CD8-positive, alpha-beta T cell (primary cell): ENCODE measurements at regions of chr18 and their contacts with region 1.

Region 1: GRCh38 chr18:63320046-63320689 is 599 bp upstream of the BCL2 start:
- DNase-seq: peak; percentile 73 to 95 (median 88)
- ATAC-seq: peak; percentile 80
- H3K4me3 ChIP-seq: peak overlapping the region; percentile 53 to 56
- H3K4me3 Mint-ChIP-seq: peak overlapping the region; percentile 88
- H3K27ac ChIP-seq: peak overlapping the region in 1 of 2 experiments; percentile 29
- H3K27ac Mint-ChIP-seq: peak overlapping the region; percentile 94
- H3K4me1 ChIP-seq: peaks cover 16% of the 10 kb centered on the region
- H3K4me1 Mint-ChIP-seq: peaks cover 42% of the 10 kb centered on the region
- H3K27me3 ChIP-seq: no peaks in the 10 kb centered on the region
- H3K27me3 Mint-ChIP-seq: no peaks in the 10 kb centered on the region
- CTCF ChIP-seq: no peak

Region 2: DNA sequence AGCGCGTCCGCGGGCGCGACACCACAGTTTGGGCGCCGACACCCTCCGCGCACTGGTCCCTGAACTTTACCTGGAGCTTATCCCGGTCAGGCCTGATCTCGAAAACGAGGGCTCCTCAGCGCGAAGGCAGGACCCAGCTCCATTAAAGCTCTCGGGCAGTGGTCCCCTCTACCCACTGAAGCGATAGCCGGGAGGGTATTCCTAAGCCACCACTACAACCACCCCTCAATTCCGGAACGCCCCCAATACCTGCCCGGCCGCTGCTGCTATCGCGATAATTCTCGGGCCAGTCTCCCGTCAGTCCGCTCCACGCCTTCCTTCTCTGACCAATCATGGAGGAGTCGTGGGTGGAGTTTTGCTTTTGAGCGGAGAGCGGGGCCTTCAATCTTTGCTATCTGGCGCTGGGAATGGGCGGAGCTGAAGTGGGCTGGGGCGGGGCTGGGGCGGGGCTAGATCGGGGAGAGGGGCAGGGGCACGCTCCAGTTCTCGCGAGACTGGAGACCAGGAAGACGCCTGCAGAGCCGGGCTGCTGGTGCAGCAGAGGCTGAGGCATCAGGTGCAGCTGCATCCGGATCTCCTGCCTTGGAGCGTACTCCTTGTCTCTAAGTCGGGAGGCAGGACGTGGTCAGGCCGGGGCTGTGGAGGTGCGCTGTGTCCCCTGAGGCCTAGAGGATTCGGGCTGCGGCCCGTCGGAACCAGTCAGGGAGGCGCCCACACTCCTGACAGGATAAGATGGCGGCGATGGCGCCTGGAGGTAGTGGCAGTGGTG is 1133.2 kb before region 1 on chr18 and contains the starts of genes PIGN and RELCH:
- CTCF ChIA-PET with region 1: no interaction called
- POLR2A ChIA-PET with region 1: no interaction called
- intact Hi-C with region 1: loop called in 1 of 2 experiments (anchors 2 kb)
- DNase-seq: peak; percentile 89 to 99 (median 93)
- ATAC-seq: peak; percentile 91
- H3K4me3 ChIP-seq: peak within 1 kb of the TSS; percentile 92 to 99
- H3K4me3 Mint-ChIP-seq: peak within 1 kb of the TSS; percentile 100
- H3K27ac ChIP-seq: peak within 1 kb of the TSS; percentile 63 to 79
- H3K27ac Mint-ChIP-seq: peak within 1 kb of the TSS; percentile 97
- H3K4me1 ChIP-seq: peaks cover 43% of the 10 kb centered on the region
- H3K4me1 Mint-ChIP-seq: peaks cover 63% of the 10 kb centered on the region
- H3K27me3 ChIP-seq: no peaks in the 10 kb centered on the region
- H3K27me3 Mint-ChIP-seq: no peaks in the 10 kb centered on the region
- CTCF ChIP-seq: no peak
- total RNA-seq, gene PIGN: 8.1 to 9.9 TPM
- total RNA-seq, gene RELCH: 39.2 to 40.5 TPM

Region 3: GRCh38 chr18:63119647-63120046 is 200.5 kb before region 1 on chr18:
- CTCF ChIA-PET with region 1: interaction called, 11 read pairs
- POLR2A ChIA-PET with region 1: interaction called, 5 read pairs
- intact Hi-C with region 1: no loop called
- DNase-seq: peak in 1 of 9 experiments; percentile 30
- ATAC-seq: no peak
- H3K4me3 ChIP-seq: no peak overlapping the region
- H3K4me3 Mint-ChIP-seq: no peak overlapping the region
- H3K27ac ChIP-seq: no peak overlapping the region
- H3K27ac Mint-ChIP-seq: no peak overlapping the region
- H3K4me1 ChIP-seq: no peaks in the 10 kb centered on the region
- H3K4me1 Mint-ChIP-seq: peaks cover 6% of the 10 kb centered on the region
- H3K27me3 ChIP-seq: peaks cover 0 to 2% of the 10 kb centered on the region in 2 experiments
- H3K27me3 Mint-ChIP-seq: peaks cover 3% of the 10 kb centered on the region
- CTCF ChIP-seq: peak; percentile 21

Region 4: GRCh38 chr18:63155169-63155852 is 164.9 kb before region 1 on chr18:
- CTCF ChIA-PET with region 1: interaction called, 70 read pairs
- POLR2A ChIA-PET with region 1: interaction called, 23 read pairs
- intact Hi-C with region 1: loop called (anchors 1 to 2 kb)
- DNase-seq: peak; percentile 66 to 92 (median 78)
- ATAC-seq: peak; percentile 75
- H3K4me3 ChIP-seq: peak overlapping the region; percentile 46 to 53
- H3K4me3 Mint-ChIP-seq: peak overlapping the region; percentile 83
- H3K27ac ChIP-seq: peak overlapping the region; percentile 48 to 99
- H3K27ac Mint-ChIP-seq: peak overlapping the region; percentile 98
- H3K4me1 ChIP-seq: peaks cover 94% of the 10 kb centered on the region
- H3K4me1 Mint-ChIP-seq: peaks cover 99% of the 10 kb centered on the region
- H3K27me3 ChIP-seq: no peaks in the 10 kb centered on the region
- H3K27me3 Mint-ChIP-seq: no peaks in the 10 kb centered on the region
- CTCF ChIP-seq: peak; percentile 79

Region 5: GRCh38 chr18:63216516-63217311 is 103.5 kb before region 1 on chr18:
- CTCF ChIA-PET with region 1: interaction called, 22 read pairs
- POLR2A ChIA-PET with region 1: interaction called, 5 read pairs
- intact Hi-C with region 1: loop called (anchors 5 kb)
- DNase-seq: peak in 4 of 9 experiments; percentile 35 to 60 (median 44)
- ATAC-seq: peak; percentile 69
- H3K4me3 ChIP-seq: peak overlapping the region; percentile 3 to 12
- H3K4me3 Mint-ChIP-seq: peak overlapping the region; percentile 77
- H3K27ac ChIP-seq: peak overlapping the region; percentile 43 to 66
- H3K27ac Mint-ChIP-seq: peak overlapping the region; percentile 95
- H3K4me1 ChIP-seq: peaks cover 86% of the 10 kb centered on the region
- H3K4me1 Mint-ChIP-seq: peaks cover 93% of the 10 kb centered on the region
- H3K27me3 ChIP-seq: no peaks in the 10 kb centered on the region
- H3K27me3 Mint-ChIP-seq: no peaks in the 10 kb centered on the region
- CTCF ChIP-seq: no peak

Region 6: GRCh38 chr18:63292831-63293683 is 27.1 kb before region 1 on chr18:
- CTCF ChIA-PET with region 1: interaction called, 44 read pairs
- POLR2A ChIA-PET with region 1: interaction called, 9 read pairs
- intact Hi-C with region 1: loop called in 1 of 2 experiments (anchors 2 kb)
- DNase-seq: peak in 7 of 9 experiments; percentile 24 to 60 (median 39)
- ATAC-seq: peak; percentile 53
- H3K4me3 ChIP-seq: peak overlapping the region in 1 of 2 experiments; percentile 2
- H3K4me3 Mint-ChIP-seq: peak overlapping the region; percentile 36
- H3K27ac ChIP-seq: peak overlapping the region in 1 of 2 experiments; percentile 9
- H3K27ac Mint-ChIP-seq: peak overlapping the region; percentile 93
- H3K4me1 ChIP-seq: peaks cover 63% of the 10 kb centered on the region
- H3K4me1 Mint-ChIP-seq: peaks cover 56% of the 10 kb centered on the region
- H3K27me3 ChIP-seq: no peaks in the 10 kb centered on the region
- H3K27me3 Mint-ChIP-seq: no peaks in the 10 kb centered on the region
- CTCF ChIP-seq: no peak

Region 7: DNA sequence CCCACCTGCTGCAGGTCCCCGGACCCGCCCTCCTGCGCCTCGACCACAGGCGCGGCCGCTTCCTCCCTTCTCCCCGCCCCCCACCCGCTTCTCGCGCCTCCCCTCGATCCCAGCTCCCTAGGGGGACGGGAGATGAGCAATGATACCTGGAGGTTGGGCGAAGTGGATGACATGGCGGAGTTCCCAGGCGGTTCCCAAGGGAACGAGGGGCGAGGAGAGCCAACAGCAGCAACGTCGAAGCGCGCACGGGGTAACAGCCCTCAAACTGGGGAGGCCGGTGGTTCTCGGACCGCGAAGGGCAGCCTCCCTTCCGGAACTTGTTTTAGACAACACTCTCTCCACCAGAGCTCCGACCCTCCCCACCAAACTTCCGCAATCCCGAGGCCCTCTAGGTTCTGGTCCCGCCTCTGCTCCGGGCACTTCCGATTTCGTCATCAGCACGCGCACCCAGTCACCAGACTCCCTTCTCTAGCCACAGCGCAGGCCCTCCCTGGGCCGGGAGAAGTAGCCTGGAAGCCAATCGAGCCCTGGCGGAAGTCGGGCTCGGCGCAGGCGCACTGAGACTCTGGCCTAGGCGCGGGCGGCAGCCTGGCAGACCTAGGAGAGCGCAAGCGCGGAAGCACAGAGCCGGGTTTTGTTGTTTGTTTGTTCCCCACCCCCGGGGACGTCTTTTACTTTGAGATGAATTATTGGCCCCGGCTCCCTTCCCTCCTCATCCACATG is 102.1 kb after region 1 on chr18 and contains the start of gene VPS4B:
- CTCF ChIA-PET with region 1: interaction called, 3 read pairs
- POLR2A ChIA-PET with region 1: interaction called, 3 read pairs
- intact Hi-C with region 1: loop called (anchors 1 to 2 kb)
- DNase-seq: peak; percentile 99 to 100 (median 99)
- ATAC-seq: peak; percentile 91
- H3K4me3 ChIP-seq: peak within 1 kb of the TSS; percentile 87 to 96
- H3K4me3 Mint-ChIP-seq: peak within 1 kb of the TSS; percentile 97
- H3K27ac ChIP-seq: peak within 1 kb of the TSS; percentile 94 to 97
- H3K27ac Mint-ChIP-seq: peak within 1 kb of the TSS; percentile 97
- H3K4me1 ChIP-seq: peaks cover 32% of the 10 kb centered on the region
- H3K4me1 Mint-ChIP-seq: peaks cover 30% of the 10 kb centered on the region
- H3K27me3 ChIP-seq: no peaks in the 10 kb centered on the region
- H3K27me3 Mint-ChIP-seq: no peaks in the 10 kb centered on the region
- CTCF ChIP-seq: no peak
- total RNA-seq, gene VPS4B: 58.5 to 76.2 TPM

Region 8: DNA sequence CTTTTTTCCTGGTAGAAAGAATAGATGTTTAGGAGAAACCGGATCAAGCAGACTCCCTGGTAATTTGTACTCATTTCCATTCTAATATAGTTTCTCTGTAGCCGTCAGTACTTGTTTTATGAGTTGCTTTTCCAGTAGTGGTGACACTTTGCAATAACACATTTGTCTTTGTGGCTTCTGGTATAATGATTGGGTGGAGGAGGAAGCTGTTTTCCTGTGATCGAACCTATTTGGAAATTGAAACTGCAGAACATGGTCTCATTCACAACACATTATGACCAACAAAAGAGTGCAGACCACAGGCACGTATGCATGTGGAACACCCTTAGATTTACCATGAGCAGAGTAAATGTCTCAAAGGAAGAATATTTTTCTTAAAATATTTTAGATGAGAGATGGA is 214.4 kb after region 1 on chr18:
- CTCF ChIA-PET with region 1: no interaction called
- POLR2A ChIA-PET with region 1: no interaction called
- intact Hi-C with region 1: no loop called
- DNase-seq: no peak
- ATAC-seq: no peak
- H3K4me3 ChIP-seq: no peak overlapping the region
- H3K4me3 Mint-ChIP-seq: no peak overlapping the region
- H3K27ac ChIP-seq: no peak overlapping the region
- H3K27ac Mint-ChIP-seq: no peak overlapping the region
- H3K4me1 ChIP-seq: no peaks in the 10 kb centered on the region
- H3K4me1 Mint-ChIP-seq: no peaks in the 10 kb centered on the region
- H3K27me3 ChIP-seq: no peaks in the 10 kb centered on the region
- H3K27me3 Mint-ChIP-seq: peaks cover 35% of the 10 kb centered on the region
- CTCF ChIP-seq: no peak

Region 9: GRCh38 chr18:65146482-65147021 is 1826.4 kb after region 1 on chr18:
- CTCF ChIA-PET with region 1: no interaction called
- POLR2A ChIA-PET with region 1: no interaction called
- intact Hi-C with region 1: no loop called
- DNase-seq: no peak
- ATAC-seq: no peak
- H3K4me3 ChIP-seq: no peak overlapping the region
- H3K4me3 Mint-ChIP-seq: no peak overlapping the region
- H3K27ac ChIP-seq: no peak overlapping the region
- H3K27ac Mint-ChIP-seq: no peak overlapping the region
- H3K4me1 ChIP-seq: no peaks in the 10 kb centered on the region
- H3K4me1 Mint-ChIP-seq: no peaks in the 10 kb centered on the region
- H3K27me3 ChIP-seq: no peaks in the 10 kb centered on the region
- H3K27me3 Mint-ChIP-seq: no peaks in the 10 kb centered on the region
- CTCF ChIP-seq: no peak